Activated naive CD4-positive, alpha-beta T cell treated with anti-CD3 and anti-CD28 coated beads for 36 hours (primary cell): ENCODE measurements at regions of chr10 and their contacts with region 1.

Region 1: GRCh38 chr10:33025039-33025438 is 67.0 kb upstream of the ITGB1 start:
- DNase-seq: no peak
- H3K4me3 Mint-ChIP-seq: no peak overlapping the region
- H3K27ac Mint-ChIP-seq: no peak overlapping the region
- H3K4me1 Mint-ChIP-seq: peaks cover 28% of the 10 kb centered on the region
- H3K27me3 Mint-ChIP-seq: no peaks in the 10 kb centered on the region

Region 2: GRCh38 chr10:33099748-33100147 is 74.7 kb after region 1 on chr10:
- CTCF ChIA-PET with region 1: no interaction called
- intact Hi-C with region 1: loop called (anchors 5 kb)
- DNase-seq: no peak
- H3K4me3 Mint-ChIP-seq: no peak overlapping the region
- H3K27ac Mint-ChIP-seq: no peak overlapping the region
- H3K4me1 Mint-ChIP-seq: peaks cover 30% of the 10 kb centered on the region
- H3K27me3 Mint-ChIP-seq: no peaks in the 10 kb centered on the region